ENCODE measurements at regions of chr5 and their contacts with region 1.

Region 1: DNA sequence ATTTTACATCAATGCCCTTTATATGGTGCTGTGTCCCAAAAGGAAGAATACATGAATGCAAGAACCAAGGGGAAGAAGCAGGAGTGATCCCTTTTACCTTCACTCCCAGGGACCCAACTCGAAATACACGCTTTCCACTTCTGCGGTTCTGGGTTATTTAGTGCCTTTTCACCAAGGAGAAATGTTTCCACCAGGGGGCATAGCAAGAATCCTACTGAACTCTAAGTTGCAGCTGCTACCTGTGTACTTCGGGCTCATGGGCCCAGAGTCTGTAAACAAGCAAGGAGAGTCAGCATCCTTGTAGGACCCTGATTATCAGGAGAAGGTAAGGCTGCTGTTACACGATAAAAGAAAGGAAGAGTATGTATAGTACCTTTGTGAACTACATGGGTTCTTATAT is 45.7 kb downstream of the DPYSL3 start:
- DNase-seq: no peak
- H3K4me3 ChIP-seq: no peak overlapping the region
- H3K27ac ChIP-seq: no peak overlapping the region
- H3K4me1 ChIP-seq: peaks cover 0 to 2% (median 0%) of the 10 kb centered on the region in 4 donors
- H3K27me3 ChIP-seq: no peaks in the 10 kb centered on the region
- CTCF ChIP-seq: peak; percentile 16 to 30 (median 25)
- EP300 ChIP-seq: no peak
- POLR2A ChIP-seq: no peak

Region 2: DNA sequence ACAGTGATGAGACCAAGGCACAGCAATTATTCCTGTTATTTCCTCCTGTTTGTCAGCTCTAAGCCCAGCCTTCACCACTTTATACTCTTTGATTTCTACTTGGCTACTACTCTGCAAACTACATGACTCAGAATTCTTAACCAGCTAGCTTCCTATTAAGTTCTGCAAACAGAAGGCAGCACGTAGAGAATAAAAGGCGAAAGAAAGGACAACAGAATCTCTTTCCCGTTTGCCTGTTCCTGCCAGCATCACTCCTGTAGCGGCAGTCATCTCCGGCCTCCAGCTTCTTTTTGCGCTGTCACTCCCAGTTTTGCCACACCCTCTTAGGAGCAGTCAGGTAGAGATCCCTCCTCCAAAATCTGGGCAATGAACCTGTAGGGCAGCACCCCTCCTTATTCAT is 15.7 kb after region 1 on chr5:
- in situ Hi-C with region 1: no loop called
- intact Hi-C with region 1: loop called (anchors 1 kb)
- DNase-seq: no peak
- H3K4me3 ChIP-seq: no peak overlapping the region
- H3K27ac ChIP-seq: peak overlapping the region; percentile 4 to 29 (median 16)
- H3K4me1 ChIP-seq: peaks cover 0 to 32% (median 15%) of the 10 kb centered on the region in 4 donors
- H3K27me3 ChIP-seq: no peaks in the 10 kb centered on the region
- CTCF ChIP-seq: no peak
- EP300 ChIP-seq: no peak
- POLR2A ChIP-seq: no peak

Region 3: DNA sequence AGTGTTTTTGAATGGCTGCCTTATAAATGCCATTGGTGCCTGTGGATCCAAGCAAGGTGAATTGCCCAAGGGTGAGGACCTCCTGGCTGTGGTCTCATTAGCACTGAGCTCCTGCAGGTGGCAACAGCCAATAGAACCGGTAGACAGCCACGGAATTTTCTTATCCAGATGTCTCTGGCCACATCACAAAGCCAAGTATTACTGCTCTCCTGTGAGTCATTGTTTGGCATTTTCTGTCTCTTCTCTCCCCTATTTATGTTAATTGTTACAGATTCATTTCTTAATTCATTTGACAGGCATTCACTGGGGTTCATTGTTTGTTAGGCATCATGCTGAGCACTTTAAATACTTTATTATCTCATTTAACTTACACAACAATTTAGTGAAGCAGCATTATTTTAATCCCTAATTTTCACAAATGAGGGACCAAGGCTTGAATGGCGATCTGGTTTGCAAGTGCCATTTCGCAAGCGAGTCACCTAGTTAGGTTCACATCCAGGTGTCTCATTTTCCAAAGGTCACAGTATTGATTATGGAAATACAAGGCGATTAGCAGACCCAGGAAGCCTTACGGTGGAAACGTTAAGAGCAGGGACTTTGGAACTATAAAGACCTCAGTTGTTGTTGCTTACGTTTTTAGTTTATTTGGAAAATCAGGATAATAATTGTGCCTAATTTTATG is 103.8 kb after region 1 on chr5:
- in situ Hi-C with region 1: loop called in 1 of 4 experiments (anchors 10 kb)
- intact Hi-C with region 1: no loop called
- DNase-seq: no peak
- H3K4me3 ChIP-seq: no peak overlapping the region
- H3K27ac ChIP-seq: no peak overlapping the region
- H3K4me1 ChIP-seq: no peaks in the 10 kb centered on the region
- H3K27me3 ChIP-seq: no peaks in the 10 kb centered on the region
- CTCF ChIP-seq: no peak
- EP300 ChIP-seq: no peak
- POLR2A ChIP-seq: no peak